Cardiac septum (tissue), 1 donor: ENCODE measurements at regions of chr11 and their contacts with region 1.

Region 1: GRCh38 chr11:46616998-46617675 is at the starts of genes ATG13 and HARBI1:
- DNase-seq: peak; percentile 95
- total RNA-seq, gene ATG13: 43.4 TPM
- total RNA-seq, gene HARBI1: 2.9 TPM

Region 2: DNA sequence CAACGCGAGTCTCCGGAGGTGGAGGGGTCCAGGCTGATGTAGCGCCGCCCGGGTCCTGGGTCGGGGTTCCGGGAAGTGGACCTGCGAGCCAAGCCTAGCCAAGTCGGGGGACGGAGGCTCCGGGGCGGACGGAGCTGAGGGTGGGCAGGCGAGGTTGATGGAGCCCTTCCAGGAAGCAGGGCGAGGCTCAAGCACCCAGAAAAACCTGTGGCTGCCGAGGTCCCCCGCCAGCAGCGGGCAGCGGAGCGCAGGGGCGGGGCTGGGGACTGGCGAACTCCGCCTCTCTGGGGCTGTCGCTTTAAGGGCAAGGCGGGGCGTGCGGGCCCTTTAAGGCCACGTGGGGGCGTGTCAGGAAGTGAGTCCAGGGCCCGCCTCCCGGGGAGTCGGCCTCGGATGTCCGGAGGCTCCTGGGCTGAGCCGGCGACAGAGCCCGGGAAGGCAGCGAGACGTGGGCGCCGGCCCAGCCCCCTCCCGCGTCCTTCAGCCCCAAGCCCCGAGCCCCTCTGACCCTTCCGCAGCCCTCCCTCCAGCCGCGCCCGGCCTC is 812.3 kb before region 1 on chr11 and contains the start of gene SLC35C1:
- intact Hi-C with region 1: no loop called
- DNase-seq: peak; percentile 99
- total RNA-seq, gene SLC35C1: 7.5 TPM

Region 3: GRCh38 chr11:46389450-46390253 is 227.5 kb before region 1 on chr11:
- intact Hi-C with region 1: loop called (anchors 2 kb)
- DNase-seq: no peak

Region 4: GRCh38 chr11:46504817-46505613 is 112.1 kb before region 1 on chr11:
- intact Hi-C with region 1: no loop called
- DNase-seq: no peak

Region 5: DNA sequence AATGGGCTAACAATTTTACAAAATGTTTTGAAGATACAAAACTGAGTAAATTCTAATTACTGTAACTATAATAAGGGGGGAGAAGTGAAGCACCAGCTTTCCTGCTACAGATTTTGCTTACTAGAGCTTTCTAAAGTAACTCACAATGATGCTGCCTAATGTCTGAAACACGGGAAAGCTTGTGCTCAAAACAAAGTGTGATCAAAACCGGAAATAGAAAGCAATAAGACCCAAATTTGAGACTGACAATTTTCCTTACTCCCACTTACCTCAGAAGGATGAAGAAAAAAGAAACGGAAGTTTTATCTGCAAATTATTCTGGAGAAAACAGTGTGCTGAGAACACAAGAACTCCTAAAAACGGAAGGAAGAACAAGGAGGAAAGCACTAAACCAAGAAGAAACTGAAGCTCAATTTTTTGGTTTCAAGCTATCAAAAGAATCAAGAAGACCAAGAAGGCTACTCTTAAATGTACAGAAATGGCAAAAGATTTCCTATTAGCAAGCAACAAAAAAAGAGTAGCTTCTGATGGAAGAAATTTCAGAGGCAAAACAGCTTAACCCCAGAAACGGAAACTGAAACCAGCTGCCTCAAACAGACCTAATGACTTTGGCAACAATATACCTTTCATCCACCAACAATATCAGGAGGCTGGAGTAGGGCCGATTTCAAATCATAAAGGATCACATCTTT is 56.7 kb before region 1 on chr11:
- intact Hi-C with region 1: no loop called
- DNase-seq: no peak

Region 6: DNA sequence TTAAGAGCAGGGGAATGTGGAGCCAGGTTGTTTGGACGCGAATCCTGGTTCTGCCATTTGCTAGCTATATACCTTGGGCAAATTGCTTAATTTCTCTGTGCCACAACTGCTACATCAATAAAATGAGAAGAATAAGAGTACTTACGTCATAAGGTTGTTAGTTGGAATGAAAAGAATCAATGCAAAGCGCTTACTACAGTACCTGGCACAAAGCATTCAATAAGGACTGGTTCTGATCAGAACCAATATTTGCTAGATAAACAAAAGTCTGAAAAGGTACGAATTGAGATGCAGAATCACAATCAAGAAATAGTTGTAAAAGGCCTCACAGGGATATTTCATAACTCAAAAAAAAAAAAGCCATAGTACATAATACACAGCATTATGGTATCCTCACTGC is 34.5 kb before region 1 on chr11:
- intact Hi-C with region 1: no loop called
- DNase-seq: no peak

Region 7: GRCh38 chr11:46593550-46594373 is 23.4 kb before region 1 on chr11 and contains the start of gene AMBRA1:
- intact Hi-C with region 1: loop called (anchors 1 kb)
- DNase-seq: peak; percentile 93
- total RNA-seq, gene AMBRA1: 18.0 TPM

Region 8: GRCh38 chr11:46700241-46701077 is 83.3 kb after region 1 on chr11 and contains the starts of genes ARHGAP1 and ZNF408:
- intact Hi-C with region 1: loop called (anchors 2 kb)
- DNase-seq: peak; percentile 100
- total RNA-seq, gene ARHGAP1: 152 TPM
- total RNA-seq, gene ZNF408: 6.7 TPM